ENCODE measurements at regions of chr12 and their contacts with region 1.

Region 1: GRCh38 chr12:123601602-123602489 is at the start of gene DDX55:
- DNase-seq: peak; percentile 77 to 79
- ATAC-seq: peak; percentile 96 to 98
- H3K4me3 ChIP-seq: peak within 1 kb of the TSS; percentile 85 to 95 (median 94)
- H3K27ac ChIP-seq: peak within 1 kb of the TSS; percentile 79 to 93 (median 86)
- H3K4me1 ChIP-seq: peaks cover 20 to 21% of the 10 kb centered on the region in 2 donors
- H3K27me3 ChIP-seq: no peaks in the 10 kb centered on the region
- CTCF ChIP-seq: peak; percentile 70 to 89 (median 81)
- POLR2A ChIP-seq: peak; percentile 39 to 75
- total RNA-seq, gene DDX55: 6.2 to 9.4 (median 7.4) TPM

Region 2: DNA sequence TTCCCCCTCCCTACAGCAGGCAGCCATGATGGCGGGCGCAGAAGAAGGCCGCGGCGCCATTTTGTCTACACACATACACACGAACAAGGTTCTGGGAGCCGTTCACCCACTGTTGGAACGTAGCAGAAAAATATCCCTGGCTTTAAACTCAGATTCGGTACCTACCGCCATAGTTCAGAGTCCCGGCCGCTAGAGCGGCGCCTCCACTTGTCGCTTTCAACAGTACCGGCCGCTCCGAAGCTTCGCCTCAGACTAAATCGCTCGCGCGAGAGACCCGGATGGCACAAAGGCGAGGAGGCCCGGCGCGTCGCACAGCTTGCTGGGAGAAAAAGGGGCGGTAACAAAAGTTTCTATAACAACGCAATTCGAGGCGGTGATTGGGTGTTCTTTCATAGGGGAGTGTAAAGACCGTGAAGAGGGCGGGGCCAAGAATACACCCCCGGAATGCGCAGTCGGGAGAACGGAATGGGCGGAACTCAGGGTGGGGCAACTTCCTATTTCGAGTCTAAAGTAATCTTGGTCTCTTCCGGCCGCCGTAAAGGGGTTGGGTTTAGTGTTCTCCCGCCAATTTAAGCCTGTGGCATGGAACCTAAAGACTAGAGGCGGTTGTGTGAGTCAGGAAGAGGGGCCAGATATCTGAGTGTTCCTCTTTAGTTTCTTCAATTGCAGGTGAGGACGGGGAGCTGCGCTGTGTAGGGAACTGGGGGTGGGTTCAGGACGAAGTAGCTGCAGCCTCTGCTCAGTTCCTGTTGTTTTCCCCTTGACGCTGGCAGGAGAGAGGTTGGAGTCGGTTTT is 1075.0 kb before region 1 on chr12 and contains the starts of genes KNTC1 and RSRC2:
- in situ Hi-C with region 1: no loop called
- intact Hi-C with region 1: loop called (anchors 10 kb)
- DNase-seq: peak; percentile 99
- ATAC-seq: peak; percentile 98
- H3K4me3 ChIP-seq: peak within 1 kb of the TSS; percentile 76 to 94 (median 90)
- H3K27ac ChIP-seq: peak within 1 kb of the TSS; percentile 88 to 99 (median 95)
- H3K4me1 ChIP-seq: peaks cover 37 to 45% of the 10 kb centered on the region in 2 donors
- H3K27me3 ChIP-seq: no peaks in the 10 kb centered on the region
- CTCF ChIP-seq: no peak
- POLR2A ChIP-seq: peak; percentile 97
- total RNA-seq, gene KNTC1: 1.3 to 5.3 (median 2.2) TPM
- total RNA-seq, gene RSRC2: 43.5 to 58.8 (median 44.9) TPM

Region 3: GRCh38 chr12:123512838-123513665 is 88.8 kb before region 1 on chr12:
- in situ Hi-C with region 1: no loop called
- intact Hi-C with region 1: no loop called
- DNase-seq: no peak
- ATAC-seq: no peak
- H3K4me3 ChIP-seq: no peak overlapping the region
- H3K27ac ChIP-seq: peak overlapping the region in 2 of 4 donors; percentile 18
- H3K4me1 ChIP-seq: no peaks in the 10 kb centered on the region
- H3K27me3 ChIP-seq: no peaks in the 10 kb centered on the region
- CTCF ChIP-seq: no peak
- POLR2A ChIP-seq: no peak

Region 4: GRCh38 chr12:123633379-123634141 is 31.7 kb after region 1 on chr12 and contains the starts of genes EIF2B1 and GTF2H3:
- in situ Hi-C with region 1: no loop called
- intact Hi-C with region 1: loop called (anchors 1 kb)
- DNase-seq: peak; percentile 92 to 96
- ATAC-seq: peak; percentile 99
- H3K4me3 ChIP-seq: peak within 1 kb of the TSS; percentile 86 to 97 (median 95)
- H3K27ac ChIP-seq: peak within 1 kb of the TSS; percentile 74 to 89 (median 84)
- H3K4me1 ChIP-seq: peaks cover 12% of the 10 kb centered on the region in 2 donors
- H3K27me3 ChIP-seq: no peaks in the 10 kb centered on the region
- CTCF ChIP-seq: peak in 2 of 5 experiments; percentile 14 to 20
- POLR2A ChIP-seq: peak; percentile 63 to 85
- total RNA-seq, gene EIF2B1: 84.5 to 118 (median 112) TPM
- total RNA-seq, gene GTF2H3: 11.5 to 14.3 (median 12.3) TPM

Region 5: DNA sequence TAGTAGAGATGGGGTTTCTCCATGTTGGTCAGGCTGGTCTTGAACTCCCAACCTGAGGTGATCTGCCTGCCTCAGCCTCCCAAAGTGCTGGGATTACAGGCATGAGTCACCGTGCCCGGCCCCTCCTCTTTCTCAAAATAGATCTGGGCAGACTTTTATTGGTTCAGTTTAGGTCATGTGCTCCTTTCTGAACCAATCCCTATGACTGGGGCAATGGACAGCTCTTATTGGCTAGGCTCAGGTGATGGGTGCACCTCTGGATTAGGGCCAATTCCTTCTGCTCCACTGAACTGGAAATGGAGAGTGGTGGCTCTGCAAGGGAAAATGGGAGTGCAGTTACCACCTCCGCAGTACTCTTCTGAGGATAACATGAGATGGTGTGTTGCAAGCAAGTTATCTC is 104.1 kb after region 1 on chr12:
- in situ Hi-C with region 1: no loop called
- intact Hi-C with region 1: no loop called
- DNase-seq: no peak
- ATAC-seq: no peak
- H3K4me3 ChIP-seq: no peak overlapping the region
- H3K27ac ChIP-seq: no peak overlapping the region
- H3K4me1 ChIP-seq: no peaks in the 10 kb centered on the region
- H3K27me3 ChIP-seq: no peaks in the 10 kb centered on the region
- CTCF ChIP-seq: no peak
- POLR2A ChIP-seq: no peak

Region 6: DNA sequence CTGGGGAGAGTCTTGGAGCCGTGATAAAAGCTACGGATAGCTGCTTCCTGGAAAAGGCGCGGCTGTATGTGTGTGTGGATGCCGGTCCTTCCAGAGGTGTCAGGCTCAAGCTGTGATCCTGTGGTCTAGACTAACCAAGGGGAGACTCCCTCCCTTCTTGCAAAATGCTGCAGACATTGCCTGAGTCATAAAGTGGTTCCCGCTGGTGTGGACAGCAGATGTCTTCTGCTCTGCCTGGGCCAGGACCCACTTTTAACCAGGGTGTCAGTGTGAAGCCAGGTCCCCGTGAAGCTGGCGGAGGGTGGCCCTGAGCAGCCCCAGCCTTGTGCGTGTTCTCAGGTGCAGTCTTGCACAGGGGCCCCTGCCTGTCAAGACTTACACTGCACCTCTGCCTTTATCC is 333.0 kb after region 1 on chr12:
- in situ Hi-C with region 1: no loop called
- intact Hi-C with region 1: no loop called
- DNase-seq: no peak
- ATAC-seq: no peak
- H3K4me3 ChIP-seq: no peak overlapping the region
- H3K27ac ChIP-seq: no peak overlapping the region
- H3K4me1 ChIP-seq: no peaks in the 10 kb centered on the region
- H3K27me3 ChIP-seq: no peaks in the 10 kb centered on the region
- CTCF ChIP-seq: no peak
- POLR2A ChIP-seq: no peak

Measured in gastrocnemius medialis (tissue), 4 donors.